ENCODE measurements at regions of chr16 and their contacts with region 1.

Region 1: DNA sequence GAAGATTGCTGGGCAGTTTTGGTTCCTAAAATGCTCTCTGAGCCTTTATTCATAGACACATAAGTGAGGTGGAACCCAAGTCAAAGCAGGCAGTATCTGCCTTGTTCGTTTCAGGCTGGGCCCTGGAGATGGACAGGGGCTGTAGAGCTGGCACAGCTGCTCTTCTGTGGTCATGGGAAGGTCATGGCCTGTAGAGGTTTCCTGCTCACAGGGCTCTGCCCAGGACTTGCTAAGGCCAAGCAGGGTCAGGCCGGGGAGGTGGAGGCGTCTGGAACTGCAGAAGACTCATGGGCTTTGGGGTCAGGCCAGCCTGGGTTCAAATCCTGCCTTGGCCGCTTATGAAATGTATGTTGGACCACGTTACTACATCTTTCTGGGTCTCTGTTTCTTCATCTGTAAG is 50.2 kb downstream of the IRX5 start:
- DNase-seq: no peak
- ATAC-seq: no peak

Region 2: GRCh38 chr16:54929090-54930004 is 51.5 kb before region 1 on chr16:
- intact Hi-C with region 1: no loop called
- DNase-seq: peak; percentile 100
- ATAC-seq: peak; percentile 88

Region 3: DNA sequence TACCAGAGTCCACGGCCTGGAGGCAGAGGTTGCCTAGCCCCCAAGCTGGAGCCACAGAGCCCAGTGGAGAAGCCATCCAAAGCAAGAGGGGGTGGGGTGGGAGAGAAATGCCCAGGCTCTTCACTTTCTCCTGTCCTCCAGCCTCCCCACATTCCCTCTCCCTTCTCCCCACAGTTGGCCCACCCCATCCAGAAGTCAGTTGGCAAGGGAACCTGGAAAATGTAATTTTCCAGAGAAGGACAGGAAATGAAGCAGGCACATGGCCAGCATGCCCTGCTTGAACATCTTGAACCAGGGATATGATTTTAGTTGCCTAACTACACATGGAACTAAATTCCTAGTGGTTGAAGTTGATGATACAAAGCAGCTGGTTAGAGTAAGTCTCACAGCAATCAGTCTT is 269.9 kb after region 1 on chr16:
- intact Hi-C with region 1: loop called (anchors 5 kb)
- DNase-seq: no peak
- ATAC-seq: no peak

Measured in left ventricle myocardium superior (tissue), 1 donor.